ENCODE measurements at regions of chr4 and their contacts with region 1.

Region 1: GRCh38 chr4:88514557-88515511 is 8.7 kb downstream of the PYURF start:
- DNase-seq: no peak
- ATAC-seq: no peak
- H3K4me3 ChIP-seq: no peak overlapping the region
- H3K27ac ChIP-seq: no peak overlapping the region
- H3K4me1 ChIP-seq: no peaks in the 10 kb centered on the region
- H3K27me3 ChIP-seq: no peaks in the 10 kb centered on the region

Region 2: DNA sequence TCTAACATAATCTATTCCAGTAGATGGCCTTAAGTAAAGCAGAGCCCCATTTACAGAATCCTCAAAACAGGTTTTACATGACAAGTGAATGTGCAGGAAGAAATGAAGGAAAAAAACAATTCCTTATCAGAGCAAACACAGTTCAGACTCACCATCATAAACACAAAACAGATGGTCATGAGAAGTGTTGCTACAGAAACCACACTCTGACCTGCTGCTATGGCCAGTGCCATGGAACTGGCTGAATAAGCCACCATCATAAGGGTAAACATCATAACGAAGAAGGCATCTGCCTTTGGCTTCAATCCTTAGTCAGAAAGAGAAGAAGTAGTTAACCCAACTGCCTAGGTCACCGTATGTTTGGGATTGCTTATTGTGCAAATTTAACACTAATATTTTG is 417.5 kb before region 1 on chr4:
- intact Hi-C with region 1: no loop called
- DNase-seq: no peak
- ATAC-seq: no peak
- H3K4me3 ChIP-seq: no peak overlapping the region
- H3K27ac ChIP-seq: no peak overlapping the region
- H3K4me1 ChIP-seq: peaks cover 0 to 6% of the 10 kb centered on the region in 2 donors
- H3K27me3 ChIP-seq: no peaks in the 10 kb centered on the region

Region 3: GRCh38 chr4:88217920-88218319 is 296.9 kb before region 1 on chr4:
- intact Hi-C with region 1: loop called (anchors 2 kb)
- DNase-seq: no peak
- ATAC-seq: no peak
- H3K4me3 ChIP-seq: no peak overlapping the region
- H3K27ac ChIP-seq: no peak overlapping the region
- H3K4me1 ChIP-seq: no peaks in the 10 kb centered on the region
- H3K27me3 ChIP-seq: no peaks in the 10 kb centered on the region

Region 4: DNA sequence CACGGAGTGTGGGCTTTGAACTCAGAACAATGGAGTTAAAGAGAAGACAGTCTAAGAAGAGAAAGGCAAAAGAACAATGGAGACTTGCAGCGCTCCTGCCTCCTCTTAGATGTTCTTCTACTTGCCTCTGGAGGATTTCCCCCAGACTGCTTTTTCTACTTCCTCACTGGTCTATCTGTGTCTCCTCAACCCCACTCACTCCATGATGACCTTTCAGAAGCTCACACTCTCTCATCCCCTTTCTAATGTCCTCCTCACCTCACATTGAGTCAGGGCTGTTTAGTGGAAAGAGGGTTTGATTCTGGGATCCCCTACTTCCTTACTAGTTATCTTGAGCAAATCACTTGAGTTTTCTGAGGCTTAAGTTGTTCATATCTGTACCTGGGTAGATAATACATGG is 148.4 kb before region 1 on chr4:
- intact Hi-C with region 1: loop called in 1 of 2 experiments (anchors 2 kb)
- DNase-seq: no peak
- ATAC-seq: no peak
- H3K4me3 ChIP-seq: no peak overlapping the region
- H3K27ac ChIP-seq: no peak overlapping the region
- H3K4me1 ChIP-seq: no peaks in the 10 kb centered on the region
- H3K27me3 ChIP-seq: no peaks in the 10 kb centered on the region

Region 5: GRCh38 chr4:88378691-88379559 is 135.9 kb before region 1 on chr4 and contains the start of gene HERC6:
- intact Hi-C with region 1: loop called in 1 of 2 experiments (anchors 5 kb)
- DNase-seq: peak; percentile 85 to 88
- ATAC-seq: peak; percentile 96
- H3K4me3 ChIP-seq: peak within 1 kb of the TSS; percentile 50 to 60
- H3K27ac ChIP-seq: peak within 1 kb of the TSS in 1 of 2 donors; percentile 1
- H3K4me1 ChIP-seq: no peaks in the 10 kb centered on the region
- H3K27me3 ChIP-seq: no peaks in the 10 kb centered on the region
- total RNA-seq, gene HERC6: 6.9 to 9.5 TPM

Region 6: DNA sequence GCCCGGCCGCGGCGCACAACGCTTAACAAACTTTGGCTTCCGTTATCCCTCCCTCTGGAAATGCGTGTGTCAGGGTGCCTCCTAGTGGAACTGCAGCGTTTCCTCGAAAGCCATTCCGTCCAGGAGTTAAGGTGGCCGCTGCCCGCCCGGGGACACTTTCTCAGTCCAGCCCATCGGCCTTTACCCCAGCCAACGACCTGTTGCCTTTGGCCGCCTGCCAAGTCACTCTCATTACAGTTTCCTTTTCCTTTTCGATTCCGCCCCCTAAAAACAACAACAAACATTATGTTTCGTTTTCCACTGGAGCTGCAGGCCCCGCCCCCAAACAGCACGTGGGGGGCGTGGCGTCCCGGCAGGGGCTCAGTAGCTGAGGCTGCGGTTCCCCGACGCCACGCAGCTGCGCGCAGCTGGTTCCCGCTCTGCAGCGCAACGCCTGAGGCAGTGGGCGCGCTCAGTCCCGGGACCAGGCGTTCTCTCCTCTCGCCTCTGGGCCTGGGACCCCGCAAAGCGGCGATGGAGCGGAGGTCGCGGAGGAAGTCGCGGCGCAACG is 58.0 kb before region 1 on chr4 and contains the start of gene HERC5:
- intact Hi-C with region 1: loop called in 1 of 2 experiments (anchors 5 kb)
- DNase-seq: peak; percentile 95 to 97
- ATAC-seq: peak; percentile 96
- H3K4me3 ChIP-seq: peak within 1 kb of the TSS; percentile 20 to 82
- H3K27ac ChIP-seq: peak within 1 kb of the TSS; percentile 41 to 57
- H3K4me1 ChIP-seq: no peaks in the 10 kb centered on the region
- H3K27me3 ChIP-seq: no peaks in the 10 kb centered on the region
- total RNA-seq, gene HERC5: 9.6 to 9.8 TPM

Region 7: DNA sequence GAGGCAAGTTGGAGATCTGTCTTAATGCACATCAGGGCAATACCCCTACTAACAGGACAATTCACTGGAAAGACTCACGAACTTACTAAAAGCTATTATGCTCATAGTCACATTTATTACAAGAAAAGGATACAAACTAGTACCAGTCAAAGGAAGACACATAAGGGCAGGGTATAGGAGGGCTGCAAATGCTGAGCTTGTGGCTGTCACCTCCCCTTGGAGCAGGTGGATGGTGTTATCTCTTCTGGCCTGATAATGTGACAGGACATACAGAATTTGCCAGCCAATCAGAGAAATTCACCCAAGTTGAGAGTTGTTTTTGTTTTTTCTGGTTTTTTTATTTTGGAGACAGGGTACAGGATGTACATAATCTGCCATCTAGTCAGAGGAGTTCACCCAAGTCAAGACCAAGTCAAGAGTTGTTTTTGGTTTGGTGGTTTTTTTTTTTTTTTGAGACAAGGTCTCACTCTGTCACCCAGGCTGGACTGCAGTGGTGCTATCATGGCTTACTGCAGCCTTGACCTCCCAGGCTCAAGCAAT is 49.1 kb before region 1 on chr4:
- intact Hi-C with region 1: loop called in 1 of 2 experiments (anchors 5 kb)
- DNase-seq: no peak
- ATAC-seq: no peak
- H3K4me3 ChIP-seq: no peak overlapping the region
- H3K27ac ChIP-seq: no peak overlapping the region
- H3K4me1 ChIP-seq: peaks cover 0 to 2% of the 10 kb centered on the region in 2 donors
- H3K27me3 ChIP-seq: no peaks in the 10 kb centered on the region

Region 8: DNA sequence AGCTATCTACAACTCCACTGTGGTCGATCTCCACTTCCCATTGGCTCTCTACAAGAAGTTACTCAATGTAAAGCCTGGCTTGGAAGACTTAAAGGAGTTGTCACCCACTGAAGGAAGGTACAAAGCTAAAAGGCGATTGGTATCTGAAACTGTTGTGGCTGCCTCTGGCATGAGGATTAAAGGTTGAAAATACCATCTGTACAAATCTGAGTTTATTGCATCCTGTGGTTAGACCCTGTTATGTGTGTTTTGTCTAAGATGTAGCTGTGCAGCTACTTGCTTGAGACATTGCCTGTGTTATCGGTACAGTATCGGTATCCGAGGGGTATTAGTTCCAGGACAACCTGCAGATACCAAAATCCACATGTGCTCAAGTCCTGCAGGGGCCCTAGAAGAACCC is 166.4 kb after region 1 on chr4:
- intact Hi-C with region 1: no loop called
- DNase-seq: no peak
- ATAC-seq: no peak
- H3K4me3 ChIP-seq: no peak overlapping the region
- H3K27ac ChIP-seq: no peak overlapping the region
- H3K4me1 ChIP-seq: no peaks in the 10 kb centered on the region
- H3K27me3 ChIP-seq: no peaks in the 10 kb centered on the region

Region 9: GRCh38 chr4:89434364-89434988 is 919.6 kb after region 1 on chr4:
- intact Hi-C with region 1: no loop called
- DNase-seq: no peak
- ATAC-seq: no peak
- H3K4me3 ChIP-seq: no peak overlapping the region
- H3K27ac ChIP-seq: no peak overlapping the region
- H3K4me1 ChIP-seq: no peaks in the 10 kb centered on the region
- H3K27me3 ChIP-seq: peaks cover 0 to 3% of the 10 kb centered on the region in 2 donors

Measured in aorta (tissue), 5 donors.